ENCODE measurements at regions of chr2 and their contacts with region 1.

Region 1: DNA sequence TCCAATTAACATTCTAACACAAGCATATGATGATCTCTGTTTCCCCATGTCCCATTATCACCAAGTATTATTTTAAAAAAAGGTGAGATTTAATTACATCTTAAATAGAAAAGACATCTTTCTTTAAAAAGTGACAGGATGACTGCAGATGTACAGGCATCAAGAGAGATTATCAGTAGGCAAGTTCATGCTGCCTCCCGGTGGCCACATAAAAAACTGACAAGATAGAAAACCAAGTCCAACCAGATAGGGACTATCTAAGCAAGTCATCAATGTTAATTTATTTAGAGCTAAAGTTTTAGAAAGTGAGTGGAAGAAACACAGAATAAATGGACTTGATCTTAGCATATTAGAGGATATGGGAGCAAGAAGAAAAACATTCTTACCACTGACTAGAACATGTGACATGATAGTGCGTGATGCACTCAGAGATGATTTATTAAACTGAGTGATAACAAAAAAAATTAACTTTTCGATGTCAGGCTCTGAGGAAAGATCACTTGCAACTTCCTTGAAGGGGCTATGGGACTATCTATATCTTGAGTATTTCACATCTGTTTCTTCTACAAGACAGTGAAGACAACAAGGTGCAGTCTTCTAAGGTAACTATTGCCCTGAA is 5.4 kb upstream of the TDRD15 start:
- DNase-seq: no peak
- ATAC-seq: peak; percentile 73

Region 2: GRCh38 chr2:21042958-21043743 is 75.3 kb before region 1 on chr2:
- intact Hi-C with region 1: loop called (anchors 10 kb)
- DNase-seq: peak; percentile 84
- ATAC-seq: peak; percentile 84

Region 3: DNA sequence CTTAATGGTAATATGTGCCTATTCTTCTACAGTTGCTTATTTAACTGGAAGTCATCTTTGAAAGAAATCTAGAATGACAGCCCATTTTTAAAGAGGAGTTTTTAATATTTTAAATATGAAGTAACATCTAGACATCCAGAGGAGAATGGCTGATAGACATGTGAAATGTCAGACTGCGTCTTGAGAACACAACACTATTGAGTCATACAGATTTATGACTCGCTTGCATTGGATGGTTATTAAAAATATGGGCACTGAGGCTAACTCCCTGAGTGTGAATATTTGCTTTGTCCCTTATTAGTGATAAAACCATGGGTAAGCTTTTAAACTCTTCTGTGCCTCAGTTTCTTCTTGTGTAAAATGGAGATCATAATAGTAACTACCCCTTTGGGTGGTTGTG is 28.2 kb after region 1 on chr2:
- intact Hi-C with region 1: no loop called
- DNase-seq: no peak
- ATAC-seq: no peak